CD8-positive, alpha-beta T cell (primary cell): ENCODE measurements at regions of chr5 and their contacts with region 1.

Region 1: DNA sequence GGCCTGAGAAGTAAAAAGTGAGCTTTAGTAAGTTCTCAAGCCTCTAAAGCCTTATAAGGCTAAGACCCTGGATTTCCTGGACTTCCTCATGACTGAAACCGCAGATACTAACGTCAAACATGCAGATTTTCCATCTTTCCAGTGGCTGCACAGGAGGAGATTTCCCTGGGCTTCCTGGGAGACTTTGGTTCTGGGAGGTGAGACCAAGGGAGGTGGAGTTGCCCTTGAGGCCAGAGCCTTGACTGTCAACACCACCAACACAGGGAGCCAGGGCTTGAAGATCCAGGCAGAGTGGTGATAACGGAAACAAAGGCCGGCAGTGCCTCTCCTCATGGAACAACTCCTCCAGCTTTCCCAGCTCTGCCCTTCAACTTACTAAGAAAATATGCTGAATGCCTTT is 144.7 kb upstream of the LRRTM2 start:
- DNase-seq: no peak
- ATAC-seq: no peak
- H3K4me3 ChIP-seq: no peak overlapping the region
- H3K4me3 Mint-ChIP-seq: no peak overlapping the region
- H3K27ac ChIP-seq: no peak overlapping the region
- H3K27ac Mint-ChIP-seq: no peak overlapping the region
- H3K4me1 ChIP-seq: no peaks in the 10 kb centered on the region
- H3K4me1 Mint-ChIP-seq: no peaks in the 10 kb centered on the region
- H3K27me3 ChIP-seq: no peaks in the 10 kb centered on the region
- H3K27me3 Mint-ChIP-seq: no peaks in the 10 kb centered on the region
- CTCF ChIP-seq: no peak

Region 2: GRCh38 chr5:138996120-138996519 is 23.8 kb before region 1 on chr5:
- CTCF ChIA-PET with region 1: no interaction called
- POLR2A ChIA-PET with region 1: no interaction called
- intact Hi-C with region 1: loop called in 1 of 2 experiments (anchors 2 kb)
- DNase-seq: no peak
- ATAC-seq: no peak
- H3K4me3 ChIP-seq: no peak overlapping the region
- H3K4me3 Mint-ChIP-seq: no peak overlapping the region
- H3K27ac ChIP-seq: no peak overlapping the region
- H3K27ac Mint-ChIP-seq: no peak overlapping the region
- H3K4me1 ChIP-seq: no peaks in the 10 kb centered on the region
- H3K4me1 Mint-ChIP-seq: no peaks in the 10 kb centered on the region
- H3K27me3 ChIP-seq: no peaks in the 10 kb centered on the region
- H3K27me3 Mint-ChIP-seq: no peaks in the 10 kb centered on the region
- CTCF ChIP-seq: no peak

Region 3: DNA sequence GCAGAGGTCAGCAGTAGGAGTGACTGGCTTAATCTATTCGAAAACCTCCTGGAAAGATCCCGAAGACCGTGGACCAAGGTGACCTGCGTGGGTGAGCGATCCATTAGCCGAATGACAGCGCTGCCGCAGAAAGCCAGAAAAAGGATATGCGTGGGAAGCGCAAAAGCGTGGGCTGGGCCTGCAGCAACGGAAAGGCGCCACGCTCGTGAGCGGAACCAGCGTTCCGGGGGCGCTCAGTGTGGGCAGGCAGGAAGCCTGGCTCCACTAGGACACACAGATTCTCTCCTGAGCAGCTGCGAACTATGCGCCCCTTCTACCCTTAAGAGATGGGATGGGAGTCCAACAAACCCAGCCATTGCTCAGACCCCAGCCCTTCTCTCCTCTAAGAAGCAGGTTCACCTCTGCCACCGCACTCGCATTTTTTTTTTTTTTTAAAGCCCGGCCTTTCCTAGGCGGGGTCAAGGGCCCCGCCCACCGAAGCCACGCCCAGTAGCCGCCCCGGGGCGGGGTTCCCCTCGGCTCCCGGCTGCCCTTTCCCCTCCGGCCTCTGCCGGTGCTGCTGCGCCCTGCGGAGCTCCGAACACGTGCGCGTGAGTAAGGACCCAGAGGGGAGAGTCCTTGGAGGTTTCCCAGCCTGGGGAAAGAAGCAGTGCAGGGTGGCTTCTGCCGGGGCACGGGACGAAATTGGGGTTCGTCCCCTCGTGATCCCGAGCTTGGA is 253.9 kb after region 1 on chr5:
- CTCF ChIA-PET with region 1: no interaction called
- POLR2A ChIA-PET with region 1: no interaction called
- intact Hi-C with region 1: no loop called
- DNase-seq: peak; percentile 73 to 91 (median 83)
- ATAC-seq: peak; percentile 90
- H3K4me3 ChIP-seq: peak overlapping the region; percentile 81 to 86
- H3K4me3 Mint-ChIP-seq: peak overlapping the region; percentile 88
- H3K27ac ChIP-seq: peak overlapping the region; percentile 56 to 57
- H3K27ac Mint-ChIP-seq: peak overlapping the region; percentile 72
- H3K4me1 ChIP-seq: peaks cover 36% of the 10 kb centered on the region
- H3K4me1 Mint-ChIP-seq: peaks cover 50% of the 10 kb centered on the region
- H3K27me3 ChIP-seq: no peaks in the 10 kb centered on the region
- H3K27me3 Mint-ChIP-seq: no peaks in the 10 kb centered on the region
- CTCF ChIP-seq: no peak